Posterior vena cava (tissue), 2 donors: ENCODE measurements at regions of chr14 and their contacts with region 1.

Region 1: GRCh38 chr14:54683882-54684794 is 117.2 kb downstream of the SAMD4A start:
- DNase-seq: peak; percentile 92

Region 2: GRCh38 chr14:54566410-54567223 is 117.5 kb before region 1 on chr14 and contains the start of gene SAMD4A:
- intact Hi-C with region 1: loop called (anchors 5 to 10 kb)
- DNase-seq: peak; percentile 94
- total RNA-seq, gene SAMD4A: 80.4 to 236 TPM

Region 3: GRCh38 chr14:54572316-54572715 is 111.8 kb before region 1 on chr14:
- intact Hi-C with region 1: loop called (anchors 5 to 10 kb)
- DNase-seq: no peak

Region 4: DNA sequence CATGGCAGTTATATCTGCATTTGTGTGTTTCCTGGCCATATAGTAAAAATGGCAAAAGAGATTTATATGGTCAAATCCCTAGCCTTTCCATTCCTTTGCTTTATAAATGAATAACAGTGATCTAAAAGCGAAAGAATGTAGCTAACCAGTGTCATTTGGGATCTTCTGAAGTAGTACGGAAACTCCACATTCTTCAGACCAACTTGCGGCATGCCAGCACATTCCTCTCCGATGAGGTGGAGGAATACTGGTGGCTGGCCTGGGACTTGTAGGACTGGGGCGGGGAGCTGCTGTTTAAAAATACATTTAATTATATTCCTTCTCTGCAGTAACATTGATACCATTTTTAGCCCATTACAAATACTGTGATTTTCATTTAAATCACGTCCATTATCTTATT is 31.9 kb before region 1 on chr14:
- intact Hi-C with region 1: loop called in 1 of 2 experiments (anchors 5 kb)
- DNase-seq: peak; percentile 95

Region 5: GRCh38 chr14:54762296-54762695 is 78.2 kb after region 1 on chr14:
- intact Hi-C with region 1: loop called in 1 of 2 experiments (anchors 10 kb)
- DNase-seq: no peak

Region 6: GRCh38 chr14:54773171-54773975 is 89.2 kb after region 1 on chr14:
- intact Hi-C with region 1: loop called (anchors 5 to 10 kb)
- DNase-seq: peak; percentile 97